ENCODE measurements at regions of chr14 and their contacts with region 1.

Region 1: DNA sequence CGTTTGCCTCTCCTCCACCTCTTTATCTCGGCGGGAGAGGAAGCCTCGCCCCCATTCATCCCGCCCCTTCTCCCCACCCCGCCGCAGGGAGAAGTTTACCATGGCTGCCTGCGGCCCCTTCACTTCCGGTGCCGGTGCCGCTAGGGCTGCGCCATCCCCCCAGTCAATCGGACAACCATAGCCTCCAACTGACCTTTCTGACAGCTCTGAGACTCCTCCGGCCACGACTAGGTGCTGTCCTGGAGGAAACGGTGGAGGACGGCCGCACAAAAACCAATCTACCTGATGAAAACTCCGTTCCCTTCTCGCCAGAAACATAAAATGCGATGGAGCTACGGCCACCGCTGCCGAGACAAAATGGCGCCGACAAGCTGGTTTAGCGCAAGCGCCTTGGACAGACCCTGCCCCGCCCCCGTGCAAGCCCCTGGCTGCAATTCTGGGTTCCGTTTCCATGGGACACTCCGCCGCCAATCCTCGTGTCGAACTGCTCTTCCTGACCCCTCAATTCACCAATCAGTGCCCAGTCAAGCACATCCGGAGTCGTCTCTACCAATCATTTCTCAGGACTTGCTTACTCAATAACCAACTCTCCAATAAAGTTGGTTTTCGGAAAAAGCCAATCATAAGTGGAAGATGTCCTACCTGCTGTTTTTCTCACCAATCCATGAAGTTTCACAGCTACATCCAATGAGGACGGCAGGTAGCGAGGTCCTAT is 436 bp upstream of the ARID4A start:
- DNase-seq: peak; percentile 94 to 99
- H3K4me3 ChIP-seq: peak overlapping the region; percentile 94
- H3K27ac ChIP-seq: peak overlapping the region; percentile 93 to 96
- H3K4me1 ChIP-seq: peaks cover 8 to 23% of the 10 kb centered on the region in 2 donors
- H3K27me3 ChIP-seq: no peaks in the 10 kb centered on the region
- CTCF ChIP-seq: peak in 1 of 3 experiments; percentile 4

Region 2: DNA sequence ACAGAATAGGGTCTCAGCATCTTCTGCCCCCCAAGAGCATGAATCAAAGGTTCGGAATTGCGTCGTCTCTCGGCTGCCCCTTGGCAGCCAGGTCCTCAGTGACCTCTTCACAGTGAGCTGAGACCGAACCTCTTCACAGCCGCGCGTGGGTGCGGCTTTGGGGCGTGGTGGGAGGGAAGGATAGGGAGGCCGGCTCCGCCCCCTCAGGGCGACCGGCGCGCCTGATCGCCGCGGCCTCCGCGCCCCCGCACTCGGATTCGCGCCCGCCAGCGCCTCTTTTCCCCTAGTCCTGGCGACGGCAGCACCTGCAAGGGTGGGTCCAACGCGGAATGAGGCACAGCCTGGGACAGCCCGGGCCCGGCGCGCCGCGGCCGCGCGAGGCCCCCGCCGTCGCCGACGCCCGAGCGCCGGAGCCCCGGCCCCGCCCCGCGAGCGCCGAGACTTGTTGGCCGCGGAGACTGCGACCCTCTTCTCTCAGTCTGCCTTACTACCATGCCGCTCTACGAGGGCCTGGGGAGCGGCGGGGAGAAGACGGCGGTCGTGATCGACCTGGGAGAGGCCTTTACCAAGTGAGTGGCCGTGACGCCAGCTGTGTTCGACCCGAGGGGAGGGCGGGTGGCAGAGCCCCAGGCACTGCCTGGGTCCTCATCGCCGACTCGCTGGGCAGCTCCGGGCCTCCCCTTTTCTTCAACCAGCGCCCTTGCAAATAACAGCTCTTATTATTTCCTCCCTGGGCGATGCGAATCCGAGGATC is 98.0 kb before region 1 on chr14 and contains the start of gene ACTR10:
- intact Hi-C with region 1: loop called (anchors 2 kb)
- DNase-seq: peak; percentile 36 to 90
- H3K4me3 ChIP-seq: peak within 1 kb of the TSS; percentile 83 to 95
- H3K27ac ChIP-seq: peak within 1 kb of the TSS; percentile 94 to 95
- H3K4me1 ChIP-seq: peaks cover 3 to 17% of the 10 kb centered on the region in 2 donors
- H3K27me3 ChIP-seq: no peaks in the 10 kb centered on the region
- CTCF ChIP-seq: no peak
- total RNA-seq, gene ACTR10: 32.2 TPM

Region 3: GRCh38 chr14:58244556-58245387 is 53.1 kb before region 1 on chr14 and contains the start of gene PSMA3:
- intact Hi-C with region 1: loop called (anchors 1 kb)
- DNase-seq: peak; percentile 94 to 99
- H3K4me3 ChIP-seq: peak within 1 kb of the TSS; percentile 59 to 87
- H3K27ac ChIP-seq: peak within 1 kb of the TSS; percentile 87 to 96
- H3K4me1 ChIP-seq: peaks cover 2 to 16% of the 10 kb centered on the region in 2 donors
- H3K27me3 ChIP-seq: no peaks in the 10 kb centered on the region
- CTCF ChIP-seq: no peak
- total RNA-seq, gene PSMA3: 83.3 TPM

Region 4: GRCh38 chr14:58281969-58282368 is 15.9 kb before region 1 on chr14:
- intact Hi-C with region 1: loop called (anchors 2 kb)
- DNase-seq: no peak
- H3K4me3 ChIP-seq: peak overlapping the region in 1 of 2 donors; percentile 39
- H3K27ac ChIP-seq: peak overlapping the region; percentile 77 to 85
- H3K4me1 ChIP-seq: peaks cover 8 to 23% of the 10 kb centered on the region in 2 donors
- H3K27me3 ChIP-seq: no peaks in the 10 kb centered on the region
- CTCF ChIP-seq: no peak

Region 5: GRCh38 chr14:58427281-58428117 is 129.6 kb after region 1 on chr14 and contains the starts of genes KIAA0586 and TIMM9:
- intact Hi-C with region 1: loop called (anchors 2 kb)
- DNase-seq: peak; percentile 88 to 98
- H3K4me3 ChIP-seq: peak within 1 kb of the TSS; percentile 66 to 94
- H3K27ac ChIP-seq: peak within 1 kb of the TSS; percentile 85 to 91
- H3K4me1 ChIP-seq: peaks cover 0 to 12% of the 10 kb centered on the region in 2 donors
- H3K27me3 ChIP-seq: no peaks in the 10 kb centered on the region
- CTCF ChIP-seq: no peak
- total RNA-seq, gene KIAA0586: 20.1 TPM
- total RNA-seq, gene TIMM9: 0.96 TPM

Measured in ascending aorta (tissue), 2 donors.